Activated T-helper 2 cell treated with anti-CD3 and anti-CD28 coated beads, Interferon-gamma antibody, Interleukin-2, Interleukin-4, amounts not matched to agents 10 μg/mL and 5 μg/mL and 100 μg/mL, durations not matched to agents 14 hours and 24 hours and 36 hours (primary cell): ENCODE measurements at regions of chr17 and their contacts with region 1.

Region 1: GRCh38 chr17:41966463-41967140 is at the start of gene CNP:
- DNase-seq: peak; percentile 86
- H3K4me3 Mint-ChIP-seq: peak within 1 kb of the TSS; percentile 80
- H3K27ac Mint-ChIP-seq: peak within 1 kb of the TSS; percentile 64
- H3K4me1 Mint-ChIP-seq: peaks cover 27% of the 10 kb centered on the region
- H3K27me3 Mint-ChIP-seq: peaks cover 2% of the 10 kb centered on the region
- total RNA-seq, gene CNP: 71.8 and 77.3 TPM in 2 replicates

Region 2: GRCh38 chr17:41930009-41930832 is 36.4 kb before region 1 on chr17 and contains the start of gene ODAD4:
- intact Hi-C with region 1: loop called (anchors 2 kb)
- DNase-seq: peak; percentile 96
- H3K4me3 Mint-ChIP-seq: peak within 1 kb of the TSS; percentile 95
- H3K27ac Mint-ChIP-seq: peak within 1 kb of the TSS; percentile 95
- H3K4me1 Mint-ChIP-seq: peaks cover 42% of the 10 kb centered on the region
- H3K27me3 Mint-ChIP-seq: no peaks in the 10 kb centered on the region
- total RNA-seq, gene ODAD4: 0.50 and 0.85 TPM in 2 replicates

Region 3: DNA sequence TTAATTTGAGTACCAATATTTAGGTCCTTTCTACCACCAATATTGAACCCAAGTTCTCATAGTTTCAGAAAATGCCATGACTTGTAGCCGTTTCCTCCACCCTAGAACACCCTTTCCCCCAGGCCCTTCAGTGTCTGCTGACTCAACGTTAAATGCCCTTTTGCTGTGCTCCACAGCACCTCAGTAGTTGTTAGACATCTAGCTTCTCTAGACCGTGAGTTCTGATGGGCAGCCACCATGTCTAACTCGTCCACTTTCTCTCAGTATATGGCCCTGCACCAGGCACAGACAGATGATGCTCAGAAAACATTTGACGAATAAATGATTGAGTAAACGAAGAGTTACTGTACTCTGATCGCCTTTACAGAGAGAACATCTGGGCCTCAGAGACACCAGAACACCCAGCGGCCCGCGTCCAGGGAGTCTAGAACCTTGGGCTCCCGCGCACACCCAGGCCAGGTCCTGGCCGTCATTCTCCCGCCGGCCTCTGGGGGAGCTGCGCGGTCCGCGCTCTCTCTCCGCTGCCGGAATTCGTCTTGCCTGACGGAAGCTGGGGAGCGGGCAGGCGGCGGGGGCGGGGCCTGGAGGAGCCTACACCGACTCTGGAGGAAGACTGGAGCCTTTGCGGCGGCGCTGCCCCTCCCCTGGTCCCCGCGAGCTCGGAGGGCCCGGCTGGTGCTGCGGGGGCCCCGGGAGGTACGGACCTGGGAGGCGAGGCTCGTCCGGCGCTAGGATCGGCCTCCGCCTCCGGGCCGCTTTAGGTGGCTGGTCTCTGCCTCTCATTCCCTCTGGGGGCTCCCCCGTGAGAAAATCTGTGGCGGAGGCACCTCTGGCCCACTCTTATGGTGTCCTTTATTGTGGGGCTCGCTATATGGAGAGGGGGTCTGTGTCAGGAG is 53.2 kb after region 1 on chr17 and contains the start of gene NKIRAS2:
- intact Hi-C with region 1: loop called (anchors 1 kb)
- DNase-seq: peak; percentile 93
- H3K4me3 Mint-ChIP-seq: peak within 1 kb of the TSS; percentile 99
- H3K27ac Mint-ChIP-seq: peak within 1 kb of the TSS; percentile 79
- H3K4me1 Mint-ChIP-seq: peaks cover 42% of the 10 kb centered on the region
- H3K27me3 Mint-ChIP-seq: no peaks in the 10 kb centered on the region
- total RNA-seq, gene NKIRAS2: 25.8 and 28.2 TPM in 2 replicates

Region 4: GRCh38 chr17:42153919-42154742 is 187.5 kb after region 1 on chr17:
- intact Hi-C with region 1: loop called (anchors 1 kb)
- DNase-seq: no peak
- H3K4me3 Mint-ChIP-seq: peak overlapping the region; percentile 92
- H3K27ac Mint-ChIP-seq: peak overlapping the region; percentile 77
- H3K4me1 Mint-ChIP-seq: peaks cover 22% of the 10 kb centered on the region
- H3K27me3 Mint-ChIP-seq: no peaks in the 10 kb centered on the region